ENCODE measurements at regions of chr12 and their contacts with region 1.

Region 1: GRCh38 chr12:47828608-47829536 is 9.2 kb upstream of the HDAC7 start:
- DNase-seq: peak; percentile 59
- ATAC-seq: peak; percentile 84
- H3K4me3 ChIP-seq: no peak overlapping the region
- H3K27ac ChIP-seq: peak overlapping the region; percentile 42
- H3K4me1 ChIP-seq: peaks cover 14% of the 10 kb centered on the region
- H3K27me3 ChIP-seq: no peaks in the 10 kb centered on the region
- CTCF ChIP-seq: no peak
- POLR2A ChIP-seq: no peak
- RAD21 ChIP-seq: no peak

Region 2: DNA sequence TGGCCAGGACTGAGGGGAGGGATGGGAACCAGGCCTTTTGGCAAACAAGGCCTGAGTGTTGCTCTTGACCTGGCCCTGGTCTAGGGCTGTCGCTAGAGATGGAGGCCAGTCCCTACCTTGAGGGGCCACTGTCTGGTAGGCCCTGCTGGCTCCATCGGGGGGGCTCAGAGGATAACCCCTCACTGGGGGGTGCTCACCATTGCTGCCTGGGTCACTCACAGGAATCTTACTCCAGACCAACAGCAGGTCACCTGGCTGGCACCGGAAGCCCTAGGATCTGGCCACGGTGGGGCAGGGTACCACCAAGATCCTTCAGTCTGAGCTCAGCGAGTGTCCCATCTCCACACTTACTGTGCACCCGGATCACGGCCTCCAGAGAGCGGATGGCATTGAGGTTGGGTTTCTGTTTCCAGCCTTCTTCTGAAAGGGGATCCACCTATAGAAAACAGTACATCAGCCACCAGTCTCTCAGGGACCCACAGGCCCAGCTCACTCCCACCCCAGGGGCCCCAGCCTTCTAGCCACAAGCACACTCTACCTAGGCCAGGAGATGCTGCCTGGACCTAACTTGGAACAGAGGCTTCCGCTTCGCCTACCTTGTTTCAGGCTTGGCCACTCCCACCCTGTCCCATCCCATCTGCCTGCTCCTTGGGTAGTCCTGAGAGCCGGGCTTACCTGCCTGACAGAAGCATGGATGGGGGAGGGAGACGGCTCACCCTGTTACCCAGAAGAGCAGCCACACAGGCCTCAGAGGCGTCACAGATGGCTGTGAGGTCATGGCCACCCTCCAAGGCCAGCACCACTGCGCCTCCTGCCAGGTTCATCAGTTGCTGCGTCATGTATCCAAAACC is 43.6 kb before region 1 on chr12:
- CTCF ChIA-PET with region 1: no interaction called
- POLR2A ChIA-PET with region 1: no interaction called
- dilution Hi-C with region 1: no loop called
- in situ Hi-C with region 1: loop called (anchors 5 kb)
- intact Hi-C with region 1: no loop called
- DNase-seq: no peak
- ATAC-seq: no peak
- H3K4me3 ChIP-seq: no peak overlapping the region
- H3K27ac ChIP-seq: no peak overlapping the region
- H3K4me1 ChIP-seq: no peaks in the 10 kb centered on the region
- H3K27me3 ChIP-seq: no peaks in the 10 kb centered on the region
- CTCF ChIP-seq: no peak
- POLR2A ChIP-seq: no peak
- RAD21 ChIP-seq: no peak

Region 3: GRCh38 chr12:48334808-48335207 is 505.9 kb after region 1 on chr12:
- CTCF ChIA-PET with region 1: no interaction called
- POLR2A ChIA-PET with region 1: no interaction called
- dilution Hi-C with region 1: no loop called
- in situ Hi-C with region 1: no loop called
- intact Hi-C with region 1: no loop called
- DNase-seq: no peak
- ATAC-seq: no peak
- H3K4me3 ChIP-seq: no peak overlapping the region
- H3K27ac ChIP-seq: no peak overlapping the region
- H3K4me1 ChIP-seq: no peaks in the 10 kb centered on the region
- H3K27me3 ChIP-seq: no peaks in the 10 kb centered on the region; the same call in 1 of the 2 replicates
- CTCF ChIP-seq: no peak
- POLR2A ChIP-seq: no peak
- RAD21 ChIP-seq: no peak

Measured in IMR-90 (cell line).